Adrenal gland (tissue), 19 donors: ENCODE measurements at regions of chr4 and their contacts with region 1.

Region 1: GRCh38 chr4:70901984-70902576 is at the start of gene MOB1B:
- DNase-seq: peak; percentile 83 to 92 (median 88)
- H3K4me3 ChIP-seq: peak within 1 kb of the TSS; percentile 68 to 99 (median 89)
- H3K27ac ChIP-seq: peak within 1 kb of the TSS; percentile 47 to 90 (median 85)
- H3K4me1 ChIP-seq: peaks cover 0 to 9% of the 10 kb centered on the region in 2 donors
- H3K27me3 ChIP-seq: no peaks in the 10 kb centered on the region
- CTCF ChIP-seq: peak in 5 of 6 experiments; percentile 30 to 53 (median 43)
- POLR2A ChIP-seq: peak in 1 of 2 donors; percentile 73
- total RNA-seq, gene MOB1B: 5.8 to 25.4 (median 16.2) TPM

Region 2: DNA sequence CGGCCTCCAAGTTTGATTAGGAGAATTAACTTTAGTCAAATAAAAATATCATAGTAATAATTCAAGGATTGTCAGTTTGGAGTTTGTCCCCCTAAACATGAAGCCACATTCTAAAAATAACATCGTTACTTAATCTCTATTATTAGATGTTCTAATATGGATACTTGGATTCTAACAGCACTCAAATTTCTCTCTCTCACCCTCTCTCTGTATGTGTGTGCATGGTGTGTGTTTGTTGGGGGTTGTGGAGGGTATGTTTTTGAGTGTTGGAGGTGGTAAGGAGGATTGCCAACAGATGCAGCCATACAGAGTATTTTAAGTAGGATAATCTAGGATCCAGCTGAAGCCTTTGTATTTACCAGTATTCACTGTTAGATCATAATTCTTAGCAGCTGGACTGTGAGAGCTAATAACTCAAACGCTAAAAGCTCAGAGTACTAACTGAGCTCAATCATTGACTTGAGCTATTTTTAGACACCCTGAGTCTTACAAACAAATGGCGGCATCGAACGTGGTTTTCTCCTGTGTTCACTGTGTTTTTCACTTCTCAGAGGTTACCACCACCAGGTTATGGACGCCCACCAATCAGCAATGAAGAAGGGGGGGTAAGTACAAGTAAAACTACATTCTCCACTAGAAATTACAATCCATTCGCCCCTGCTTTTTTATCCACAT is 264.7 kb before region 1 on chr4:
- intact Hi-C with region 1: no loop called
- DNase-seq: no peak
- H3K4me3 ChIP-seq: no peak overlapping the region
- H3K27ac ChIP-seq: no peak overlapping the region
- H3K4me1 ChIP-seq: no peaks in the 10 kb centered on the region
- H3K27me3 ChIP-seq: no peaks in the 10 kb centered on the region
- CTCF ChIP-seq: no peak
- POLR2A ChIP-seq: no peak

Region 3: DNA sequence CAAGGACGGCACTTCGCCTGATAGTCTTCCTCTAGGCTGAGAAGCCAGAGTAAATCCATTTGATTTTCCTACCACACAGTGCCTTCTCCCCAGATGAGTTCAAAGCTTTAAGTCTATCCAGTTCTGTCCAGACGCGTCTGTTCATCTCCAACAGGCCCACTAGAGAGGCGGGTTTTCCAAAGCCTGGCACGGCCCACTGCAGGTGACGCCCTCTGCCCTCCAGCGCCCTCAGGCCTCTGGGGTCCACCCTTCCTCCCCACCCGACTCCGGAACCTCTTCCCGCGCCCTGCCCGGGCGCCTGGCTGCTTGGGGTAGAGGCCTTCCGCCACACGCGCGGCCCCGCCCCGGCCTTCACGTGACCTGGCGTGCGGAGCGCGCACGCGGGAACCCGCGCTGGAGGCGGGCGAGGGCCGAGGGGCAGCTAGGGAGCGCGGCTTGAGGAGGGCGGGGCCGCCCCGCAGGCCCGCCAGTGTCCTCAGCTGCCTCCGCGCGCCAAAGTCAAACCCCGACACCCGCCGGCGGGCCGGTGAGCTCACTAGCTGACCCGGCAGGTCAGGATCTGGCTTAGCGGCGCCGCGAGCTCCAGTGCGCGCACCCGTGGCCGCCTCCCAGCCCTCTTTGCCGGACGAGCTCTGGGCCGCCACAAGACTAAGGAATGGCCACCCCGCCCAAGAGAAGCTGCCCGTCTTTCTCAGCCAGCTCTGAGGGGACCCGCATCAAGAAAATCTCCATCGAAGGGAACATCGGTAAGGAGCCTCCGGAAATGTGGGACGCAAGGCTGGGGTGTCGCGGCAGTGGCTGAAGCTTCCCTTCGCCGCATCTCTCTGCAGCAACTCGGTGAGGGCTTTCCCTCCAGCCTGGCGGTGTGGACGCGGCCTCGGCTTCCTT is 91.3 kb after region 1 on chr4 and contains the start of gene DCK:
- intact Hi-C with region 1: loop called in 1 of 2 experiments (anchors 10 kb)
- DNase-seq: peak; percentile 89 to 93 (median 91)
- H3K4me3 ChIP-seq: peak within 1 kb of the TSS; percentile 48 to 75 (median 69)
- H3K27ac ChIP-seq: peak within 1 kb of the TSS in 4 of 5 donors; percentile 75 to 92 (median 80)
- H3K4me1 ChIP-seq: peaks cover 7 to 40% of the 10 kb centered on the region in 2 donors
- H3K27me3 ChIP-seq: no peaks in the 10 kb centered on the region
- CTCF ChIP-seq: peak in 1 of 6 experiments; percentile 1
- POLR2A ChIP-seq: peak; percentile 75 to 82
- total RNA-seq, gene DCK: 9.8 to 21.0 (median 11.8) TPM

Region 4: GRCh38 chr4:71141125-71141524 is 239.0 kb after region 1 on chr4:
- intact Hi-C with region 1: no loop called
- DNase-seq: no peak
- H3K4me3 ChIP-seq: no peak overlapping the region
- H3K27ac ChIP-seq: no peak overlapping the region
- H3K4me1 ChIP-seq: no peaks in the 10 kb centered on the region
- H3K27me3 ChIP-seq: no peaks in the 10 kb centered on the region
- CTCF ChIP-seq: no peak
- POLR2A ChIP-seq: no peak